ENCODE measurements at regions of chr17 and their contacts with region 1.

Region 1: GRCh38 chr17:3724370-3725077 is 821 bp downstream of the HASPIN start:
- DNase-seq: peak in 2 of 5 donors; percentile 18 to 55
- H3K4me3 ChIP-seq: peak overlapping the region; percentile 44 to 93 (median 50)
- H3K27ac ChIP-seq: no peak overlapping the region
- H3K4me1 ChIP-seq: peaks cover 0 to 11% (median 7%) of the 10 kb centered on the region in 3 donors
- H3K27me3 ChIP-seq: no peaks in the 10 kb centered on the region
- CTCF ChIP-seq: no peak

Region 2: DNA sequence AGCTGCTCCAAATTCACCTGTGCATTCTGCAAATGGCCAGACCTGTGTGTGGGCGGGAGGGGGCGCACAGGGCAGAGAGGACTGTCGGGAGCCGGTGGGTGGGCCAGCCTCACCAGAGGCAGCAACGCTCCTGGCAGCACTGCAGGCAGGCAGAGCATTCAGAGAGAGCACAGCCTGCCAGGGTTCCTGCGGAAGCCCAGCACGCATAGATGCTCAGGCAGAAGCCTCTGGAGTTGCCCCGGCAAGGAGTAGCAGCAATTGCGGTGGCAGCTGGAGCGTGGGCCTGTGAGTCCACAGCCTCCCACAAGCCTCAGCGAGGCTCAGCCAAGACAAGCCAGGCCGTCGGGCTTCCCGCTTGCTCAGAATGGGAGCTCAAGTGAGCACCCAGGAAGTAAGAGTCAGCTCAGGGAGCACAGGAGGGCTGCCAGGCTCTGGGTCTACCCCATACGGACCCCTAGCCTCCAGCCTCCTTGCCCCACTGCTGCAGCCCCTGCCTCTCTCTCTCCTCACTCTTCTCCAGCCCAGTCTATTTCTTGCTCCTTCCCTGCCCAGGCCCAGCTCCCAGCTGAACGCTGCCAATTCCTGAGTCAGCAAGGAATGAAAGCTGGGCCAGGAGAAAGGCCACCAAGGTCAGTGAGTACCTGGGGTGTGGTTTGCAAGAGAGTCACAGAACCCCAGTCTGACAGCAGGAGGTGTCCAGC is 46.3 kb before region 1 on chr17:
- intact Hi-C with region 1: loop called (anchors 5 kb)
- DNase-seq: no peak
- H3K4me3 ChIP-seq: no peak overlapping the region
- H3K27ac ChIP-seq: no peak overlapping the region
- H3K4me1 ChIP-seq: no peaks in the 10 kb centered on the region
- H3K27me3 ChIP-seq: no peaks in the 10 kb centered on the region
- CTCF ChIP-seq: no peak

Region 3: GRCh38 chr17:3870871-3871306 is 146.4 kb after region 1 on chr17:
- intact Hi-C with region 1: no loop called
- DNase-seq: peak in 1 of 5 donors; percentile 33
- H3K4me3 ChIP-seq: no peak overlapping the region
- H3K27ac ChIP-seq: no peak overlapping the region
- H3K4me1 ChIP-seq: no peaks in the 10 kb centered on the region
- H3K27me3 ChIP-seq: no peaks in the 10 kb centered on the region
- CTCF ChIP-seq: no peak

Measured in kidney (tissue), 22 donors.